Naive thymus-derived CD4-positive, alpha-beta T cell (primary cell): ENCODE measurements at regions of chr10 and their contacts with region 1.

Region 1: GRCh38 chr10:99548041-99548530 is 15.3 kb downstream of the NKX2-3 start:
- DNase-seq: no peak
- ATAC-seq: peak; percentile 41
- H3K4me3 ChIP-seq: no peak overlapping the region
- H3K4me3 Mint-ChIP-seq: no peak overlapping the region
- H3K27ac ChIP-seq: no peak overlapping the region
- H3K27ac Mint-ChIP-seq: no peak overlapping the region
- H3K4me1 ChIP-seq: no peaks in the 10 kb centered on the region
- H3K4me1 Mint-ChIP-seq: no peaks in the 10 kb centered on the region
- H3K27me3 ChIP-seq: no peaks in the 10 kb centered on the region
- H3K27me3 Mint-ChIP-seq: peaks cover 46 to 75% (median 66%) of the 10 kb centered on the region in 5 donors

Region 2: DNA sequence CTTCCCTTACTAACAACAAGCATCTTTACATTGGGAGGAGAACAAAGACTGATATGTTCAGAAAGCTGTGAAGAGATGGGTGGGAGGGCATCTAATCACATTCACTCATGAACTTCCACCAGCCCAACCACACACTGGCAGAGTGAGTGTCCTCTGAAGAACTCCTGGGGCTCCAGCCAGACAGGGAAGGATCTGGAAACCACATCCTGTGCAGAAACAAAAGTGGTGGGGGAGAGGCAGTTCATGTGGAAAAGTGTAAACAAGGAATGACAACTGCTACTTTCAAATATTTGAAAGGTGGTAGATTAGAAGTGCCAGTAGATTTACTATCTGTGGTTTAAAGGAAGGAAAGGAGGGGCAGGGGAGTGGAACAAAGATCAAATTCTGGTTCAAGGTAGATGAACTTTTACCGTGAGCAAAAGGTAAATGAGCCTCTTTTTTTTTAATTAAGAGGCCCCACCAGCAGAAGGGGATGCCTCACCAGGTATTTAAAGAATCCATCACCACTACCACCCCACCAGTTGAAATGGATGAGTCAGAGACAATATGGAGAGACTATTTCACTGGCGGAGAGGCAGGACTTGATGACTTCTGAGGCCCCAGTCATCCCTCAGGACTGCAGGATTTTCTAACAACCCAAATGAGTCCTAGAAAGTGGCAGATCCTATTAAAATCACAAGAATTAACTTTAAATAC is 152.2 kb before region 1 on chr10:
- CTCF ChIA-PET with region 1: no interaction called
- POLR2A ChIA-PET with region 1: no interaction called
- intact Hi-C with region 1: loop called in 1 of 2 experiments (anchors 2 kb)
- DNase-seq: no peak
- ATAC-seq: no peak
- H3K4me3 ChIP-seq: no peak overlapping the region
- H3K4me3 Mint-ChIP-seq: no peak overlapping the region
- H3K27ac ChIP-seq: peak overlapping the region; percentile 39
- H3K27ac Mint-ChIP-seq: peak overlapping the region in 7 of 9 donors; percentile 7 to 74 (median 60)
- H3K4me1 ChIP-seq: no peaks in the 10 kb centered on the region
- H3K4me1 Mint-ChIP-seq: peaks cover 0 to 15% (median 9%) of the 10 kb centered on the region in 7 donors
- H3K27me3 ChIP-seq: no peaks in the 10 kb centered on the region
- H3K27me3 Mint-ChIP-seq: no peaks in the 10 kb centered on the region